ENCODE measurements at regions of chr4 and their contacts with region 1.

Region 1: GRCh38 chr4:70734168-70734954 is 12.6 kb downstream of the RUFY3 start:
- DNase-seq: peak; percentile 74
- ATAC-seq: peak; percentile 92
- H3K4me3 ChIP-seq: peak overlapping the region; percentile 62
- H3K27ac ChIP-seq: peak overlapping the region; percentile 49
- H3K4me1 ChIP-seq: peaks cover 30% of the 10 kb centered on the region
- H3K27me3 ChIP-seq: no peaks in the 10 kb centered on the region
- CTCF ChIP-seq: no peak
- EP300 ChIP-seq: 0 out of 4 replicates have a peak, but pooled peaks have one; percentile 1 to 14
- POLR2A ChIP-seq: no peak; the same call in 1 of the 2 replicates
- RAD21 ChIP-seq: no peak

Region 2: GRCh38 chr4:70651864-70652506 is 82.4 kb before region 1 on chr4:
- CTCF ChIA-PET with region 1: interaction called, 9 read pairs
- POLR2A ChIA-PET with region 1: interaction called, 3 read pairs
- RAD21 ChIA-PET with region 1: interaction called, 8 read pairs
- SMC1A ChIA-PET with region 1: interaction called, 11 read pairs
- in situ Hi-C with region 1: no loop called
- intact Hi-C with region 1: loop called (anchors 5 kb)
- DNase-seq: no peak
- ATAC-seq: peak; percentile 68
- H3K4me3 ChIP-seq: no peak overlapping the region
- H3K27ac ChIP-seq: no peak overlapping the region
- H3K4me1 ChIP-seq: no peaks in the 10 kb centered on the region
- H3K27me3 ChIP-seq: no peaks in the 10 kb centered on the region
- CTCF ChIP-seq: peak; percentile 20 to 60 (median 52); a peak in 4 of 6 replicates
- EP300 ChIP-seq: no peak
- POLR2A ChIP-seq: no peak
- RAD21 ChIP-seq: peak; percentile 72

Region 3: DNA sequence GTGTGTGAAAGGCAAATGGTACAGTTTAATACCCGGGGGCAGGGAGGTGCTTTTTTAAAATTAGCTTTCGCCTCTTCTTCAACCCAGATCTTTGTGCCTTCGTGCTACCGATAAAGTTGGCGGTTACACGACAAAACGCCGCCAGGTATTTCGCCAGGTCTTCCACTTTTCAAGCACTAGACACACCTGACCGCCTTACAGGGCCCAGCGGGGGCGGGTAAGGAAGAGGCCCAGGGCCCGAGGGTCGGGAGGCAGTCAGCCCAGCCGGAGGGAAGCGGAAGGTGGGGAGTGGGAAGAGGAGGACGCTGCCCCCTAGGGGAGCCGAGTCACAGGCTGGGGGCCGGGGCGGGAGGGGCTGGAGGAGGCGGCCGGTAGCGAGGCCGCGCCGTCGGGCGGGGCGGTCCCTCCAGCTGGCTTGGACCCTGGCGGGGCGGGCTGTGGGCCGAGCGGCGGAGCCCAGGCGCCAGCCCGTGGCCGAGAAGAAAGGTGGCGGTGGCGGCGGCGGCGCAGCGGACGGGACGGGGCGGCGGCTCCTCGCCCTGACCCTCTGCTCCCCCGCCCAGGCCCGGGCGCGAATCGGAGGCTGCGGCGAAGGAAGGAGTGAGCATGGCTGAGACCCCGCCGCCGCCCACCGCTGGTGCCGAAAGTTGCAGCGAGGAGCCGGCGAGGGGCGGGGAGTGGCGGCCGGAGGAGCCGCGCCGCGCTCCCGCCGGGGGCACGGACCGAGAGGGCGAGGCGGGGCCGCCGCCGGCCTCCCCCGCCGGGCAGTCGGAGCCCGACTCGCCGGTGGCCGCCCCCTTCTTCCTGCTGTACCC is 29.8 kb before region 1 on chr4:
- CTCF ChIA-PET with region 1: interaction called, 77 read pairs
- POLR2A ChIA-PET with region 1: interaction called, 35 read pairs
- RAD21 ChIA-PET with region 1: interaction called, 82 read pairs
- SMC1A ChIA-PET with region 1: interaction called, 74 read pairs
- in situ Hi-C with region 1: no loop called
- intact Hi-C with region 1: no loop called
- DNase-seq: no peak
- ATAC-seq: peak; percentile 77
- H3K4me3 ChIP-seq: peak overlapping the region; percentile 92
- H3K27ac ChIP-seq: peak overlapping the region; percentile 50
- H3K4me1 ChIP-seq: no peaks in the 10 kb centered on the region; the same call in 1 of the 2 replicates
- H3K27me3 ChIP-seq: no peaks in the 10 kb centered on the region
- CTCF ChIP-seq: peak; percentile 28 to 47 (median 47); a peak in 4 of 6 replicates
- EP300 ChIP-seq: no peak
- POLR2A ChIP-seq: peak; percentile 18; the same call in 1 of the 2 replicates
- RAD21 ChIP-seq: peak; percentile 32; the same call in 1 of the 2 replicates

Region 4: DNA sequence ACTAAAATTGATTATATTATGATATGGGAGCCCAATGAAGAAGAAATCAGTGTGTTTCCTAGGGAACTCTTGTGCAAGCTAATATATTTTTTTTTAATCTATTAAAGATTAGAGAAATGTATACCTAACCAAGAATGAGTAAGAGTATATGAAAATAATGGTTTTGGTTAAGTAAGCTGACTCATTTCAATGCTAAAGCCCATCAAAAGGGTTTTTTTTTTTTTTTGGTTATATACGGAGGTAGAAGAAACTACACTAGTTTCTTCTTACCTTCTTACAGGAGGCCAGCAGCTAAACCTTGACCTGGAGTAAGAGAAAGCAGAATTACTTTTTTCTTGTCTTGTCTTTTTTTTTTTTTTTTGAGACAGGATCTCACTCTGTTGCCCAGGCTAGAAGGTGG is 15.0 kb after region 1 on chr4:
- CTCF ChIA-PET with region 1: interaction called, 55 read pairs
- POLR2A ChIA-PET with region 1: interaction called, 24 read pairs
- RAD21 ChIA-PET with region 1: interaction called, 86 read pairs
- SMC1A ChIA-PET with region 1: interaction called, 204 read pairs
- in situ Hi-C with region 1: no loop called
- intact Hi-C with region 1: loop called (anchors 2 kb)
- DNase-seq: no peak
- ATAC-seq: peak; percentile 82
- H3K4me3 ChIP-seq: no peak overlapping the region
- H3K27ac ChIP-seq: no peak overlapping the region
- H3K4me1 ChIP-seq: peaks cover 29% of the 10 kb centered on the region
- H3K27me3 ChIP-seq: no peaks in the 10 kb centered on the region; a peak in 1 of 4 replicates
- CTCF ChIP-seq: no peak
- EP300 ChIP-seq: no peak
- POLR2A ChIP-seq: no peak
- RAD21 ChIP-seq: no peak

Region 5: GRCh38 chr4:70772929-70773555 is 38.7 kb after region 1 on chr4:
- CTCF ChIA-PET with region 1: interaction called, 7 read pairs
- POLR2A ChIA-PET with region 1: interaction called, 4 read pairs
- RAD21 ChIA-PET with region 1: interaction called, 26 read pairs
- SMC1A ChIA-PET with region 1: interaction called, 36 read pairs
- in situ Hi-C with region 1: no loop called
- intact Hi-C with region 1: no loop called
- DNase-seq: no peak
- ATAC-seq: peak; percentile 78
- H3K4me3 ChIP-seq: 0 out of 2 replicates have a peak overlapping the region, but pooled peaks have one; percentile 13
- H3K27ac ChIP-seq: peak overlapping the region; percentile 25
- H3K4me1 ChIP-seq: peaks cover 9% of the 10 kb centered on the region
- H3K27me3 ChIP-seq: no peaks in the 10 kb centered on the region
- CTCF ChIP-seq: no peak
- EP300 ChIP-seq: no peak
- POLR2A ChIP-seq: no peak
- RAD21 ChIP-seq: no peak

Region 6: DNA sequence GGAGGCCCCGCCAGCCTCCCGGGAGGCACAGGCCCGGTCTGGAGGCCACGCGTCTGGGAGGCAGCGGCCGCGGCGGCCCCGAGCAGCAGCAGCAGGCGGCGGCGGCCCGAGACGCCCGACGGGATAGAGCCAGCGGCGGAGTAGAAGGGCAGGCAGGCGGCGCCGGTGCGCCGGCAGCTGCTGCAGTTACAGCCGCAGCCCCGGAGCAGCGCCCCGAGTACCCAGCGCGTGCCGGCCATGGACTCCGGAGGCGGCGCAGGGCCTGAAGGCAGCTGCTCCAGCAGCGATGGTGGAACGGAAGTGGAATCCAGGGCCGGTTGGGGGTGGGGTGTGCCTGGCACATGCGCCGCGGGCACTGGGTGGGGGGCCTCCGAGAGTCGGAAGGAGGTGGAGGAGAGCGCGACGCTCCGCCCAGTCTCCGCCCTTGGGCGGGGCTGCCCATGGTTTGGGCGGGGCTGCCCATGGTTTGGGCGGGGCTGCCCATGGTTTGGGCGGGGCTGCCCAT is 105.3 kb after region 1 on chr4 and contains the start of gene GRSF1:
- CTCF ChIA-PET with region 1: interaction called, 7 read pairs
- POLR2A ChIA-PET with region 1: interaction called, 3 read pairs
- RAD21 ChIA-PET with region 1: interaction called, 21 read pairs
- SMC1A ChIA-PET with region 1: interaction called, 24 read pairs
- in situ Hi-C with region 1: no loop called
- intact Hi-C with region 1: no loop called
- DNase-seq: peak; percentile 60
- ATAC-seq: peak; percentile 86
- H3K4me3 ChIP-seq: peak within 1 kb of the TSS; percentile 85
- H3K27ac ChIP-seq: peak within 1 kb of the TSS; percentile 85
- H3K4me1 ChIP-seq: peaks cover 13% of the 10 kb centered on the region
- H3K27me3 ChIP-seq: no peaks in the 10 kb centered on the region
- CTCF ChIP-seq: peak in 1 of 3 experiments; percentile 32; a peak in 2 of 6 replicates
- EP300 ChIP-seq: no peak
- POLR2A ChIP-seq: peak; percentile 88
- RAD21 ChIP-seq: no peak
- polyA plus RNA-seq, gene GRSF1: 37.5 to 59.6 TPM

Region 7: DNA sequence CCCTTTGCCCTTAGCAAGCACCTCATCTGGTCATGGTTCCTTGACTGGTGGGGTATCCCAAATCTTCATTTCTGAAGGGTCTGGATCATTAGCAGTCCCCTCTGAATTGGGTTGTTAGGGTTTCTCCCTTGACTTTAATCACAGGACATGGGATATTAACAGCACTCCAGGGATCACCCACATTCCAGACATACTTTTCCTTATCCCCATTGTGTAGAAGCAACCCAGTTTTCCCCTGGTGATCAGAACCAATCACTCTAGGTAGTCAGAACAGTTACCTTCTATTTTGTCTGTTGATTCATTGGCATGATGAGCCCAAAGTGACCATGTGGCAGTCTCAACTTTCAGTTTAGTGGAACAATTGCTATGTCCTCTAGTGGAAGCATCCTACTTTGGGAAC is 134.4 kb after region 1 on chr4:
- CTCF ChIA-PET with region 1: no interaction called
- POLR2A ChIA-PET with region 1: no interaction called
- RAD21 ChIA-PET with region 1: no interaction called
- SMC1A ChIA-PET with region 1: no interaction called
- in situ Hi-C with region 1: no loop called
- intact Hi-C with region 1: no loop called
- DNase-seq: no peak
- ATAC-seq: no peak
- H3K4me3 ChIP-seq: no peak overlapping the region
- H3K27ac ChIP-seq: no peak overlapping the region
- H3K4me1 ChIP-seq: no peaks in the 10 kb centered on the region
- H3K27me3 ChIP-seq: no peaks in the 10 kb centered on the region
- CTCF ChIP-seq: no peak
- EP300 ChIP-seq: no peak
- POLR2A ChIP-seq: no peak
- RAD21 ChIP-seq: no peak

Region 8: DNA sequence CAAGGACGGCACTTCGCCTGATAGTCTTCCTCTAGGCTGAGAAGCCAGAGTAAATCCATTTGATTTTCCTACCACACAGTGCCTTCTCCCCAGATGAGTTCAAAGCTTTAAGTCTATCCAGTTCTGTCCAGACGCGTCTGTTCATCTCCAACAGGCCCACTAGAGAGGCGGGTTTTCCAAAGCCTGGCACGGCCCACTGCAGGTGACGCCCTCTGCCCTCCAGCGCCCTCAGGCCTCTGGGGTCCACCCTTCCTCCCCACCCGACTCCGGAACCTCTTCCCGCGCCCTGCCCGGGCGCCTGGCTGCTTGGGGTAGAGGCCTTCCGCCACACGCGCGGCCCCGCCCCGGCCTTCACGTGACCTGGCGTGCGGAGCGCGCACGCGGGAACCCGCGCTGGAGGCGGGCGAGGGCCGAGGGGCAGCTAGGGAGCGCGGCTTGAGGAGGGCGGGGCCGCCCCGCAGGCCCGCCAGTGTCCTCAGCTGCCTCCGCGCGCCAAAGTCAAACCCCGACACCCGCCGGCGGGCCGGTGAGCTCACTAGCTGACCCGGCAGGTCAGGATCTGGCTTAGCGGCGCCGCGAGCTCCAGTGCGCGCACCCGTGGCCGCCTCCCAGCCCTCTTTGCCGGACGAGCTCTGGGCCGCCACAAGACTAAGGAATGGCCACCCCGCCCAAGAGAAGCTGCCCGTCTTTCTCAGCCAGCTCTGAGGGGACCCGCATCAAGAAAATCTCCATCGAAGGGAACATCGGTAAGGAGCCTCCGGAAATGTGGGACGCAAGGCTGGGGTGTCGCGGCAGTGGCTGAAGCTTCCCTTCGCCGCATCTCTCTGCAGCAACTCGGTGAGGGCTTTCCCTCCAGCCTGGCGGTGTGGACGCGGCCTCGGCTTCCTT is 259.1 kb after region 1 on chr4 and contains the start of gene DCK:
- CTCF ChIA-PET with region 1: interaction called, 5 read pairs
- POLR2A ChIA-PET with region 1: no interaction called
- RAD21 ChIA-PET with region 1: interaction called, 17 read pairs
- SMC1A ChIA-PET with region 1: interaction called, 9 read pairs
- in situ Hi-C with region 1: no loop called
- intact Hi-C with region 1: loop called (anchors 5 kb)
- DNase-seq: no peak
- ATAC-seq: peak; percentile 87
- H3K4me3 ChIP-seq: peak within 1 kb of the TSS; percentile 95
- H3K27ac ChIP-seq: peak within 1 kb of the TSS; percentile 82
- H3K4me1 ChIP-seq: 0 out of 2 replicates have a peak, but pooled peaks cover 3% of the 10 kb centered on the region
- H3K27me3 ChIP-seq: no peaks in the 10 kb centered on the region
- CTCF ChIP-seq: no peak
- EP300 ChIP-seq: no peak
- POLR2A ChIP-seq: peak; percentile 94
- RAD21 ChIP-seq: no peak
- polyA plus RNA-seq, gene DCK: 20.0 to 26.7 TPM

Measured in GM12878 (cell line).